ENCODE measurements at regions of chr12 and their contacts with region 1.

Region 1: GRCh38 chr12:108511633-108512540 is 3.2 kb upstream of the FICD start:
- DNase-seq: peak; percentile 42
- H3K4me3 ChIP-seq: no peak overlapping the region
- H3K27ac ChIP-seq: no peak overlapping the region
- H3K27me3 ChIP-seq: no peaks in the 10 kb centered on the region
- CTCF ChIP-seq: peak; percentile 88

Region 2: GRCh38 chr12:107679336-107679735 is 832.6 kb before region 1 on chr12:
- CTCF ChIA-PET with region 1: interaction called, 17 read pairs
- POLR2A ChIA-PET with region 1: no interaction called
- DNase-seq: no peak
- H3K4me3 ChIP-seq: no peak overlapping the region
- H3K27ac ChIP-seq: no peak overlapping the region
- H3K27me3 ChIP-seq: peaks cover 17% of the 10 kb centered on the region
- CTCF ChIP-seq: no peak

Region 3: DNA sequence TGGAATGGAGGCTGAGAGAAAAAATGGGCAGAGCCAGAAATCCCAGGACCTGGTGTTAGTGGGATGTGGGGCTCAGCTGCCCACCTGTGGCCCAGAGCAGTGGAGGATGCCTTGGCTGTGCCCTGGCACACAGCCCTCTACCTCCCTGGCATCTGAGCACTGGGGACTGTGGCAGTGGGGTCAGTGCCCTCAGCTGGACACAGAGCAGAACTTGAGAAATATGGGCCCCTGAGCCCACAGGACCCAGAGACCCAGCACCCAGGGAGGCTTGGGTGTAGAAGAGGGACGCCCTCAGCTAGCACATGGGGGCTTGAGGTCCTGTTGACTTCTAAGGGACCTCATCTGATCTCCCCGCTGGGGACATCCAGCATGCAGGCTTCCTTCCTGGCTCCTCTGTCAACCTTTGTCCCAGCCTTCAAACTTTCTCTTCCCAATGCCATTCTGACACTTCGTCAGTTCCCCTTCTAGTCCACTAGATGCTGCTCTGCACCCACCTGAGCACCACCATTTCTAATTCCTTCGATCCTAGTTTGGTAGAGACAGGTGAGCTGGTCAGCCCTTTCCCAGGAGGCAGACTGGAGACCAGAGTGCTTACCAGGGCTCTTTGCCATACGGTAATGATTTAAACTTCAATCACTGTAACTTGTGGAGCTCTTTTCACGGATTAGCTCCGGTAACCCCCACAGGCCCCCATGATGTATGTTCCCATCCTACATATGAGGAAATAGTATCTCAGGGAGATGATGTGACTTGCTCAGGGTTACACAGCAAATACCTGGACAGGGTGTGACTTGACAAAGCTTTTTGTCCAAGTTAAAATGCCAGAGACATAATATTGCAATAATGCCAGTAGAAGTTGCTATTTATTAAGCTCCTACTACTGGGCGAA is 593.7 kb before region 1 on chr12:
- CTCF ChIA-PET with region 1: interaction called, 13 read pairs
- POLR2A ChIA-PET with region 1: no interaction called
- DNase-seq: no peak
- H3K4me3 ChIP-seq: no peak overlapping the region
- H3K27ac ChIP-seq: no peak overlapping the region
- H3K27me3 ChIP-seq: no peaks in the 10 kb centered on the region
- CTCF ChIP-seq: peak; percentile 56

Measured in AG04450 (cell line).